ENCODE measurements at regions of chr17 and their contacts with region 1.

Region 1: DNA sequence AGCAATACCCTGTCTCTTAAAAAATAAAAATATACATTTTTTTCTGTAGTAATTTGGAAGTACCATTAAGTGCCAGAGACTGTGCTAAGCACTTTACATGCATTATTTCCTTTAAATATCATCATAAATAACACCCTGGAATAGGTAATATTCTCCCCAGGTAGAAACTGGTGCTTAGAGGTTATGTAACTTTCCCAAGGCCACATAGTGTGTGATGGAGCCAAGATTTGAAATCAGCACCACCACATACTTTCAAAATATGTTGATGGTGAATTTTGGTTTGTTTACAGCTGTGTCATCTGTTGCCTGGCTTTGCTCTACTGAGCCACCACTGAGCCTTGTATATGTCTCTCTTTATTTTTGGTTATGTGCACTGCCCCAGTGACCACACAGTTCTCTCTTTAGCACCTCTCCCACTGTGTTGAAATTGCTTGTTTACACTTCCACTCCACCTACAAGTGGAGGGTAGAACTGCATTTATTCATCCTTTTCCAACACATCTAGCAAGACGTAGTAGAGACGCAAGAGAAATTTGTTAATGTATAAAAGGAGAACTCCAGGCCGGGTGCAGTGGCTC is 19.0 kb upstream of the NBR1 start:
- DNase-seq: no peak
- H3K4me3 ChIP-seq: no peak overlapping the region
- H3K27ac ChIP-seq: no peak overlapping the region
- H3K4me1 ChIP-seq: no peaks in the 10 kb centered on the region
- H3K27me3 ChIP-seq: no peaks in the 10 kb centered on the region
- CTCF ChIP-seq: no peak

Region 2: GRCh38 chr17:42918902-42919521 is 233.0 kb before region 1 on chr17:
- CTCF ChIA-PET with region 1: no interaction called
- POLR2A ChIA-PET with region 1: no interaction called
- intact Hi-C with region 1: no loop called
- DNase-seq: no peak
- H3K4me3 ChIP-seq: no peak overlapping the region
- H3K27ac ChIP-seq: no peak overlapping the region
- H3K4me1 ChIP-seq: peaks cover 9% of the 10 kb centered on the region
- H3K27me3 ChIP-seq: no peaks in the 10 kb centered on the region
- CTCF ChIP-seq: no peak

Region 3: DNA sequence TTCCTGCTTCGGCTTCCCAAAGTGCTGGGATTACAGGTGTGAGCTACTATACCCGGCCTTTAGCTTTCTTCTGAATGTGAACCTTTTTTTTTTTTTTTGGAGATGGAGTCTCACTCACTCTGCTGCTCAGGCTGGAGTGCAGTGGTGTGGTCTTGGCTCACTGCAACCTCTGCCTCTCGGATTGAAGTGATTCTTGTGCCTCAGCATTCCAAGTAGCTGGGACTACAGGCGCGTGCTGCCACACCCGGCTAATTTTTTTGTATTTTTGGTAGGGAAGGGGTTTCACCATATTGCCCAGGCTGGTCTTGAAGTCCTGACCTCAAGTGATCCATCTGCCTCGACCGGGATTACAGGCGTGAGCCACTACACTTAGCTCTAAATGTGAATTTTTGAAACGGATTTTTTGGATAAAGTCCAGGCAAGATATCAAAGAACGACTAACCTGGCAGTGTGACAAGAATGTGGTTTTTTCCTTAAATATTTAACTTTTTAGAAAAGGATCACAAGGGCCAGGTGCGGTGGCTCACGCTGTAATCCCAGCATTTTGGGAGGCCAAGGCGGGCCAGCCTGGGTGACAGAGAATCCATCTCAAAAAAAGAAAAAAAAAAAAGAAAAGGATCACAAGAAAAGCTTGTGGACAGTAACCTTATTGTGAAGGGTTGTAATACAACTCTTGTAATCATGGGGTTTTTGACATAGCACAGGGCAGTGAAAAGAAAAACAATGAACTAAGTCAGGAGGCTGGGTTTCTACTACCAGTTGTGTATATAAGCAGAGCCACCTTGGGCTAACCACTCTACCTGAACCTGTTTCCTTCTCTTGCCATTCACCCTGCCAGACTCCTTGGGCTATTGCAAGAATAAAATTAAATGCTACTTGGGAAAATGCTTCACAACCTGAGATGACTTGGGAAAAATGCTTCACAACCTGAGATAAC is 33.0 kb before region 1 on chr17:
- CTCF ChIA-PET with region 1: no interaction called
- POLR2A ChIA-PET with region 1: interaction called, 10 read pairs
- intact Hi-C with region 1: no loop called
- DNase-seq: no peak
- H3K4me3 ChIP-seq: no peak overlapping the region
- H3K27ac ChIP-seq: no peak overlapping the region
- H3K4me1 ChIP-seq: no peaks in the 10 kb centered on the region; the same call in 1 of the 2 replicates
- H3K27me3 ChIP-seq: no peaks in the 10 kb centered on the region
- CTCF ChIP-seq: no peak

Measured in PC-9 (cell line).